Endothelial cell of umbilical vein (primary cell): ENCODE measurements at regions of chr2 and their contacts with region 1.

Region 1: DNA sequence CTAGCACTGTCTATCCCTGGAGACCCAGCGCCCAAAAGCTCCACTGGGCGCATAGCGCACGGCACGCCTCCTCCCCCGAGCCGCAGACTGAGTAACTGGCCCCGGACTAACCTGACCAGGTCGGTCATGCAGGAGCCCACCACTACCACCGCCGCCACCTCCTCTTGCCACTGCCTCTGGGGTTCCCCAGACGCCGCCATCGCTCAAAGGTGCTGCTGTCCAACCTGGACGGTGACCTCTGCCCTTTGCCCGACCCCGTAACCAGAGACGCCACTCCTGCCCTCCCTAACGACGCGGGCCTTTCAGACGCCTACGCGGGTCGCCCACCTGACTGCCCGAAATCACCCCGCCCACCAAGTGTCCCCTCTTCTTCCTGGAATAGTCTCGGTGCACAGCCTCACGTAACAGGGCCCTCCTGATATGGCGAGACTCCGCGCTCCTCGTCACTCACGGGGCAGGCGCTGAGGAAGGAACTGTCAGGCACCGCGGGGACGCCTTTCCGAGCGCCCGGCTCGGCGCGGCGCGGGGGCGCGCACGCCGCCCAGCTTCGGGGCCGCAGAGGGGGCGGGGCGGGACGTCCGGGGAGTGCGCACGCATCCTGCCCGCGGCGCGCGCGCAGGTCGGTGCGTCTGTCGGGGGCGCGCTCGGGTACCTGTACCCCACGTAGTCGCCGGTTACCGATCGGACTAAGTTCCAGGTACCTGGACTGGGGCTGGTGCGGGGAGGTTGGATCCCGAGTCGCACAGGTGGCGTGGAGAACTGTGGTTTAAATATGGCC is at the starts of genes BABAM2 and RBKS:
- DNase-seq: peak; percentile 86
- H3K4me3 ChIP-seq: peak within 1 kb of the TSS; percentile 26 to 71 (median 55)
- H3K27ac ChIP-seq: peak within 1 kb of the TSS; percentile 88
- H3K4me1 ChIP-seq: peaks cover 18% of the 10 kb centered on the region
- H3K27me3 ChIP-seq: no peaks in the 10 kb centered on the region
- CTCF ChIP-seq: no peak
- POLR2A ChIP-seq: peak; percentile 62
- total RNA-seq, gene BABAM2: 26.9 and 27.6 TPM in 2 replicates
- total RNA-seq, gene RBKS: 0.64 and 0.74 TPM in 2 replicates

Region 2: GRCh38 chr2:27715318-27716210 is 174.8 kb before region 1 on chr2:
- CTCF ChIA-PET with region 1: no interaction called
- POLR2A ChIA-PET with region 1: no interaction called
- dilution Hi-C with region 1: no loop called
- intact Hi-C with region 1: no loop called
- DNase-seq: no peak
- H3K4me3 ChIP-seq: peak overlapping the region; percentile 31 to 44 (median 31)
- H3K27ac ChIP-seq: peak overlapping the region; percentile 14
- H3K4me1 ChIP-seq: peaks cover 14% of the 10 kb centered on the region
- H3K27me3 ChIP-seq: no peaks in the 10 kb centered on the region
- CTCF ChIP-seq: no peak
- POLR2A ChIP-seq: no peak

Region 3: GRCh38 chr2:27754138-27754588 is 136.2 kb before region 1 on chr2:
- CTCF ChIA-PET with region 1: interaction called, 7 read pairs
- POLR2A ChIA-PET with region 1: no interaction called
- dilution Hi-C with region 1: no loop called
- intact Hi-C with region 1: loop called (anchors 1 kb)
- DNase-seq: peak; percentile 81
- H3K4me3 ChIP-seq: no peak overlapping the region
- H3K27ac ChIP-seq: no peak overlapping the region
- H3K4me1 ChIP-seq: no peaks in the 10 kb centered on the region
- H3K27me3 ChIP-seq: no peaks in the 10 kb centered on the region
- CTCF ChIP-seq: peak; percentile 94 to 97
- POLR2A ChIP-seq: no peak

Region 4: DNA sequence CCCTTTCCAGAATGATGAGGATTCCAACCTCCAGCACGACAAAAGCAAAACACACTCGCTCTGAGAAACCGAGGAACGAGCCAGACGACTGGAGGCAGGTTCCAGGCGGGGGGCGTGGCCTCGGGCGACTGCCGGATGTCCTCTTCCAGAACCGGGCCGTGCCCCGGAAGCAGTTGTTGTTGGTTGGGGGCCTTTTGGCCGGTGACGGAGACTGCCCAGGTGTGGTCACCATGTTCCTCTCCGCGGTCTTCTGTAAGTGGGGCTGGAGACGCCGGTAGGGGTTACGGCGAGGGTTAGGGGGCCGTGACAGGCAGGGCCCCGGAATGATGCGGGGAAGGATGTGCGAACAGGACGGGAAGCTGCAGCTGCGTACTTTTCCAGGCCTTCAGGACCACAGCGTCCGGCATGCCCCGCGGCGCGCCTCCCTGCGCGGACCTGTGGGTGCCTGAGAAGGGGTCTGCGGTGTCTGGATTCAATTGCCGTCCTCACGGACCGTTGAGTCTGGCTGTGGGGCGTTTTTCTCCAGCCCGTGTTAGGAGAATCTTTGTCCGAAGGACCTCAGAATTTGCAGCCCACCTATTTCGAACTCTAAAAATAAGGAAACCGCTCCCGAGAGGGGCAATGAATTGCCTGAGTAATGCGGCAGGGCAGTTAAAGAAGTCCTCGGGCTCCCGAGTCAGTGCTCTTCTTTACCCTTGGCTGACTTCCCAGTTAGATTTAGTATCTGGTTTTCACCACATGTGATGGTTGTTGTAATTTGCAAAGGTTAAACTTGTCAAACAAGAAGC is 118.6 kb before region 1 on chr2 and contains the start of gene MRPL33:
- CTCF ChIA-PET with region 1: no interaction called
- POLR2A ChIA-PET with region 1: interaction called, 3 read pairs
- dilution Hi-C with region 1: no loop called
- intact Hi-C with region 1: loop called (anchors 1 kb)
- DNase-seq: peak; percentile 93
- H3K4me3 ChIP-seq: peak within 1 kb of the TSS; percentile 91 to 95 (median 95)
- H3K27ac ChIP-seq: peak within 1 kb of the TSS; percentile 90
- H3K4me1 ChIP-seq: peaks cover 25% of the 10 kb centered on the region
- H3K27me3 ChIP-seq: no peaks in the 10 kb centered on the region
- CTCF ChIP-seq: no peak
- POLR2A ChIP-seq: peak; percentile 90
- total RNA-seq, gene MRPL33: 96.7 and 97.4 TPM in 2 replicates

Region 5: GRCh38 chr2:27807476-27807875 is 82.9 kb before region 1 on chr2:
- CTCF ChIA-PET with region 1: interaction called, 4 read pairs
- POLR2A ChIA-PET with region 1: no interaction called
- dilution Hi-C with region 1: no loop called
- intact Hi-C with region 1: loop called (anchors 1 kb)
- DNase-seq: peak; percentile 57
- H3K4me3 ChIP-seq: no peak overlapping the region
- H3K27ac ChIP-seq: no peak overlapping the region
- H3K4me1 ChIP-seq: peaks cover 18% of the 10 kb centered on the region
- H3K27me3 ChIP-seq: no peaks in the 10 kb centered on the region
- CTCF ChIP-seq: peak; percentile 57 to 63
- POLR2A ChIP-seq: no peak

Region 6: GRCh38 chr2:27920148-27920885 is 30.0 kb after region 1 on chr2:
- CTCF ChIA-PET with region 1: no interaction called
- POLR2A ChIA-PET with region 1: no interaction called
- dilution Hi-C with region 1: no loop called
- intact Hi-C with region 1: loop called (anchors 1 kb)
- DNase-seq: peak; percentile 95
- H3K4me3 ChIP-seq: peak overlapping the region in 1 of 3 experiments; percentile 14
- H3K27ac ChIP-seq: peak overlapping the region; percentile 96
- H3K4me1 ChIP-seq: peaks cover 17% of the 10 kb centered on the region
- H3K27me3 ChIP-seq: no peaks in the 10 kb centered on the region
- CTCF ChIP-seq: no peak
- POLR2A ChIP-seq: no peak

Region 7: GRCh38 chr2:28055325-28055970 is 165.1 kb after region 1 on chr2:
- CTCF ChIA-PET with region 1: no interaction called
- POLR2A ChIA-PET with region 1: no interaction called
- dilution Hi-C with region 1: no loop called
- intact Hi-C with region 1: loop called (anchors 10 kb)
- DNase-seq: peak; percentile 47
- H3K4me3 ChIP-seq: no peak overlapping the region
- H3K27ac ChIP-seq: no peak overlapping the region
- H3K4me1 ChIP-seq: peaks cover 21% of the 10 kb centered on the region
- H3K27me3 ChIP-seq: no peaks in the 10 kb centered on the region
- CTCF ChIP-seq: no peak
- POLR2A ChIP-seq: no peak

Region 8: DNA sequence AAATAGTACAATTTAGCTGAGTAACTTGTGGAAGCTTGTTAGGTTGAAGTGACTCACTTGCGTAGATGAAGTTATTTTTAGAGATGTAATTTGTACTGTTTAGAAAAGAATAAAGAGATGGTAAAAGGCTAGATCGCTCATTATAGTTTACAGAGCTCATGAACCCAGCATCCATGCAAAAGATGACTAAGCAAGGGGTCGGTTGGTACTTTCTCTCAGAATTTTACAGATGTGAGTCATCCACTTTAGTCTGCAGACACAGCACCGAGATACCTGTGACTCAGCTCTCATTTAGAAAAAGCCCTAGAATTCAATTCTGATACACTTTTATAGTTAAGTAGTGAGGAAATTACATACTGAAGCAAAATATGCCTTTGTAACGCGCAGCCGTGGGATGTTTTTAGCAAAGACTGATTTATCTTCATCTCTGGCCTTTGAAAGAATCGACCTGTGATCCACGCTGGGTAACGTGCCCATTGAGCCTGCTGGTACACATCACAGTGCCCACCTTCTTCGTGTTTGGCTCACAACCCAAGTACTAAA is 385.8 kb after region 1 on chr2:
- CTCF ChIA-PET with region 1: no interaction called
- POLR2A ChIA-PET with region 1: no interaction called
- dilution Hi-C with region 1: no loop called
- intact Hi-C with region 1: loop called (anchors 2 kb)
- DNase-seq: peak; percentile 96
- H3K4me3 ChIP-seq: no peak overlapping the region
- H3K27ac ChIP-seq: peak overlapping the region; percentile 98
- H3K4me1 ChIP-seq: peaks cover 29% of the 10 kb centered on the region
- H3K27me3 ChIP-seq: no peaks in the 10 kb centered on the region
- CTCF ChIP-seq: no peak
- POLR2A ChIP-seq: no peak